ENCODE measurements at regions of chr10 and their contacts with region 1.

Region 1: DNA sequence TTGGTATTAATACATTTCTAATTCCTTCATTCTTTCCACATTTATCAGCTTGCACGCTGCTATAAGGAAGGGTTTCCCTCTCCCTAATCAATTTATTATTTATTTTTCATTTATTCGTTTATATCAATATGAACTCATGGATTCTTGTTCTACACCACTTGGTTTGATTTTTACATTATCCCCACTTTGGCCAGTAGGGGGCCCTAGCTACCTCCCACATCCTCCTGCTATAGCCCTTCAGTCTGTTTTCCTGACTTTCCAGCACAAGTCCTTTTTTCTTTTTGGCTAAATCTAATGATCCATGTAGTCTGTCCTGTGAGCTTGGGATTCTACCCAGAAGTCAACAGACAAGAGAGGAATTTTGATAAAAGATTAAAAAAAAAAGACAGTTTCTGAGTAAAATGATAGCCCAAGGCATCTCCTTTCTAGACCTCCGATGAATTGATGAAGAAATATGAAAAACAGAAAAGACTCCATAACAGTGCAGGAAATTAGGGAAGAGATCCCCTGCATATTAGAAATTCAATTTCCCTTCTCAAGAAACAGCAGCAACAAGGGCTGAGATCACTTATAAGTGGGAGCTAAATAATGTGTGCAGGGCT is 47.7 kb downstream of the LYZL2 start:
- DNase-seq: peak in 1 of 5 donors; percentile 37
- H3K4me3 ChIP-seq: no peak overlapping the region
- H3K27ac ChIP-seq: no peak overlapping the region
- H3K4me1 ChIP-seq: no peaks in the 10 kb centered on the region
- H3K27me3 ChIP-seq: no peaks in the 10 kb centered on the region
- CTCF ChIP-seq: peak; percentile 23 to 45 (median 27)
- EP300 ChIP-seq: no peak
- POLR2A ChIP-seq: no peak

Region 2: DNA sequence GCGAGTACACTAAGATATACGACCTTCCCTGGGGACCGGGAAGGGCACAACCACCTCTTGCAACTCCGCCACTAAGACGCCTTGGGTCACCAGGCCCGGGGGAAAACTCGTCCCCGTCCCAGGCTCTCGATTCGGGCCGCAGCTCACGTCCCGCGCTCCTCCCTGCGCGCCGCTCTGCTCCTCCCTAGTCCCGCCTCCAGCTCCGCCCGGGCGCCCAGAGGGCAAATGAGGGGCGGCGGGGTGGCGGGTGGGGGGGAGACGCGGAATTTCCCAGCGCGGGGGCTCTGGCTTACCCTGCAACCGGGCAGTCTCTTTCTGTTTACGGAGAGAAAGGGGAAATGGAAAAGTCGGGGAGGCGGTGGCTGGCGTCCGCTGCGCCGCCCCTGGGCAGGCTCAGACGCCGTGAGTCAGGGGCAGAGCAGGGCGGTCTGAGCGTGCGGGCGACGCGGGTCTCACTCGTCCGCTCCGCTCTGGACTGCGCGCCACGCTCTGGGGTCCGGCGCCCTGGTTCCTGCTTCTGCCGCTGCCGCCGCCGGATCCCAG is 148.1 kb before region 1 on chr10 and contains the start of gene MAP3K8:
- intact Hi-C with region 1: no loop called
- DNase-seq: peak; percentile 80 to 88 (median 84)
- H3K4me3 ChIP-seq: peak within 1 kb of the TSS; percentile 94
- H3K27ac ChIP-seq: peak within 1 kb of the TSS; percentile 97 to 98
- H3K4me1 ChIP-seq: peaks cover 6% of the 10 kb centered on the region
- H3K27me3 ChIP-seq: no peaks in the 10 kb centered on the region
- CTCF ChIP-seq: no peak
- EP300 ChIP-seq: no peak
- POLR2A ChIP-seq: peak; percentile 49
- total RNA-seq, gene MAP3K8: 9.9 to 32.5 (median 13.5) TPM

Region 3: DNA sequence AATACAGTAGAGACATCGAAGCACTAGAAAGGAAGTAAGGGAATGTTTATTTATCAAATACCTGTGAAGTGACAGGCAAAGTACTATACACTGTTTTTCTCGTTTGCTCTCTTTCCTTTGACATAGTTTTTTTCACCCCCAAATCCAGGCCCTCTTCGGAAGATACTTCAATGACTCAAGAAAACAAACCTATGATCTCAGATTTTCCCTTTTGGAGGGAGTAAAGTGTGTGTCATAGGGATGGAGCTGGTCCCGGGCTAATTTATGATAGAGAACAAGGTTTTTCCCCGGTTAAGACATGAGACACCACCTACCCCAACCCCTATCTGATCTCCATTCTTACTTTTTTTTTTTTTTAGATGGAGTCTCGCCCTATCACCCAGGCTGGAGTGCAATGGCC is 86.2 kb before region 1 on chr10:
- intact Hi-C with region 1: loop called in 1 of 4 experiments (anchors 1 kb)
- DNase-seq: no peak
- H3K4me3 ChIP-seq: no peak overlapping the region
- H3K27ac ChIP-seq: no peak overlapping the region
- H3K4me1 ChIP-seq: peaks cover 2% of the 10 kb centered on the region
- H3K27me3 ChIP-seq: no peaks in the 10 kb centered on the region
- CTCF ChIP-seq: no peak
- EP300 ChIP-seq: no peak
- POLR2A ChIP-seq: no peak

Region 4: GRCh38 chr10:30519639-30520038 is 62.2 kb before region 1 on chr10:
- intact Hi-C with region 1: no loop called
- DNase-seq: no peak
- H3K4me3 ChIP-seq: no peak overlapping the region
- H3K27ac ChIP-seq: no peak overlapping the region
- H3K4me1 ChIP-seq: no peaks in the 10 kb centered on the region
- H3K27me3 ChIP-seq: no peaks in the 10 kb centered on the region
- CTCF ChIP-seq: no peak
- EP300 ChIP-seq: no peak
- POLR2A ChIP-seq: no peak

Measured in ovary (tissue), 10 donors.